Natural killer cell (primary cell): ENCODE measurements at regions of chr15 and their contacts with region 1.

Region 1: DNA sequence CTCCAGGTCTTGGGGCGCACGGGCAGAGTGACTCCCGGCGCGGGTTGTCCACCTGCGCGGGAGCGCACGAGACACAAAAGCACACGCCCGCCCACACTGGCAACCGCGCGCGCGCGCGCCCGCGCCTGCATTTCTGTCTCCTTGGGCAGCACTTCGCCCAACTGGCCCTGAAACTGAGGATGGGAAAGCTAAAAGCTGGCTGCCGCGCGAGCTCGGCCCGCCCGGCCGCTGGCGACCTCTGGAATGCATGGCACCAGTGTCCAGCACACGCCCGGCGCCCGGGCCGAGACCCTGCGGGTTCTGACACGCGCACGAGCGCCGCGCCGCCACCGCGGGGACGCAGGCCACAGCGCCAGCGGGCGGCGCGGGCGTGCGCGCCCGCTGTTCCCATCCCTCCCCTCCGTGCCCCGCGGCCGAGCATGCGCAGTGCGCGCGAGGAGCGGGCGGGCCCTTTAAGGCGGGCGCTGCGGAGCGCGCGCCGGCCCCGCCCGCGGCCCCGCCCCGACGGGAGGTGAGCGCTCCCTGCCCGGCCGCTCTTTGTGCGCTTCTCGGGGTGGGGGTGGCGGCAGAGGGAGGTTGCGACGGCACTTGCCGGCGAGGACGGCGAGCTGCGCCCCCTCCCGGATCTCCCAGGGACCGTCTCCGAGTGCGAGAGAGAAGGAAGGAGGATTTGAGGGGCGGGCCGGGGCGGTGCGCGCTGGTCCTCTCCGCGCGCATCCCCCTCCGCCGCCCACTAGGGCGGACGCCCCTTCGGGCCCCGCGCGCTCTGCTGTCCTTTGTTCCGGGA is 1.0 kb upstream of the MEX3B start:
- DNase-seq: peak; percentile 78 to 95
- ATAC-seq: peak; percentile 75 to 87 (median 79)
- H3K4me3 ChIP-seq: peak overlapping the region; percentile 69
- H3K4me3 Mint-ChIP-seq: peak overlapping the region; percentile 90
- H3K27ac ChIP-seq: peak overlapping the region; percentile 41
- H3K27ac Mint-ChIP-seq: peak overlapping the region; percentile 76 to 87
- H3K4me1 ChIP-seq: peaks cover 24% of the 10 kb centered on the region
- H3K4me1 Mint-ChIP-seq: peaks cover 7 to 33% of the 10 kb centered on the region in 2 donors
- H3K27me3 ChIP-seq: peaks cover 10% of the 10 kb centered on the region
- H3K27me3 Mint-ChIP-seq: peaks cover 7 to 10% of the 10 kb centered on the region in 2 donors
- CTCF ChIP-seq: peak; percentile 42

Region 2: DNA sequence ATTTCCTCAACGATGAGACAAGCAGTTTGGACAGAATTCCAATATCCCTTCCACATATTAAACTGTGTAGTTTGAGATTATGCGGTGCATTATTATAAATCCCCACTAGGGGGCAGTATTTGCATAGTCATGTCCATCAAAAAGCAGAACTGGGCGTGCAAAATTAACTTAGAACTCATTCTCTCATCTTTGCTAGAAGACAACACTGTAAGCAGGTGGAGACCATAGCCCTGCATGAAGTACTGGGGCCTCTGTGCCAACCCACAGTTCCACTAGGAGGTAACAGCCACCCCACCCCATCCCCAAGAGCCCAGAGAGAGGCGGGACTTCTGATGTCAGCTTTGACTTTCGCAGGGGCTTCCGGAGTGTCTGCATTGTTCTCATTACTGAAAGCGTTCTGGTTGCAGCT is 566.2 kb before region 1 on chr15:
- intact Hi-C with region 1: loop called (anchors 5 kb)
- DNase-seq: peak in 1 of 2 donors; percentile 71
- ATAC-seq: peak; percentile 31 to 75 (median 66)
- H3K4me3 ChIP-seq: no peak overlapping the region
- H3K4me3 Mint-ChIP-seq: no peak overlapping the region
- H3K27ac ChIP-seq: no peak overlapping the region
- H3K27ac Mint-ChIP-seq: no peak overlapping the region
- H3K4me1 ChIP-seq: no peaks in the 10 kb centered on the region
- H3K4me1 Mint-ChIP-seq: no peaks in the 10 kb centered on the region
- H3K27me3 ChIP-seq: no peaks in the 10 kb centered on the region
- H3K27me3 Mint-ChIP-seq: no peaks in the 10 kb centered on the region
- CTCF ChIP-seq: peak; percentile 95

Region 3: DNA sequence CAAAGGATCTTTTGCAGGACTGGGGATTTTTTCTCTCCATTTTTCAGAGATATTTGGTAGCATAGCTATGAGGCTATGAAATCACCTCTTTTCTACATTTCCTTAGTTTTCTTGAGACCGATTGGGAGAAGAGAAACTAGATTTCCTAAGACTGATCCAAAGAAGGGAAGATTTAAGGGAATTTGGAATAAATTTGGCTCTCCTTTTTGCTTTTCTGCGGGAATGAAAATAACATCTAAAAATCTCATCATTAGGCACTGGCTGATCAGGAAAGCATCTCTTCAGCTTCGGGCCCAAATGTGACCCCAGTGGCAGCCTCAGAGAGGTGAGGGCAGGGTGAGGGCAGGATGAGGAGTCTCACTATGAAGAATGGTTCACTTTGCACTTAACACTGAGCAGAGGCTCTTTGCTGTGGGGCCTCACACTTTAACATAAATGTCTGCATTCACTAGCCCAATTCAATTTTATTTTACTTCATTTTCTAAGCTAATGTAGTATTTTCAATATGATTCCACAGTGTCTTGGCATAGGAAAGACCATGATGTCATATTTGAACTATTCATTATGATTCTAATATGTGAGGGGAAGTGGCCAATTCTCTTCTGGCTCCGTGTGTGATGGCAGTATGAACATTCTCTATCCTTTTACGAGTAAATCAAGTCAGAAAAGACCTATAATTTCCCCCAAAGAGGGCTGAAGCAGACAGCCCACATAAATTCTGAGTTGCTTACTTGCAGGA is 194.3 kb before region 1 on chr15:
- intact Hi-C with region 1: no loop called
- DNase-seq: no peak
- ATAC-seq: no peak
- H3K4me3 ChIP-seq: no peak overlapping the region
- H3K4me3 Mint-ChIP-seq: no peak overlapping the region
- H3K27ac ChIP-seq: no peak overlapping the region
- H3K27ac Mint-ChIP-seq: no peak overlapping the region
- H3K4me1 ChIP-seq: no peaks in the 10 kb centered on the region
- H3K4me1 Mint-ChIP-seq: peaks cover 0 to 9% of the 10 kb centered on the region in 2 donors
- H3K27me3 ChIP-seq: no peaks in the 10 kb centered on the region
- H3K27me3 Mint-ChIP-seq: peaks cover 0 to 6% of the 10 kb centered on the region in 2 donors
- CTCF ChIP-seq: no peak